Endothelial cell of umbilical vein (primary cell): ENCODE measurements at regions of chr6 and their contacts with region 1.

Region 1: DNA sequence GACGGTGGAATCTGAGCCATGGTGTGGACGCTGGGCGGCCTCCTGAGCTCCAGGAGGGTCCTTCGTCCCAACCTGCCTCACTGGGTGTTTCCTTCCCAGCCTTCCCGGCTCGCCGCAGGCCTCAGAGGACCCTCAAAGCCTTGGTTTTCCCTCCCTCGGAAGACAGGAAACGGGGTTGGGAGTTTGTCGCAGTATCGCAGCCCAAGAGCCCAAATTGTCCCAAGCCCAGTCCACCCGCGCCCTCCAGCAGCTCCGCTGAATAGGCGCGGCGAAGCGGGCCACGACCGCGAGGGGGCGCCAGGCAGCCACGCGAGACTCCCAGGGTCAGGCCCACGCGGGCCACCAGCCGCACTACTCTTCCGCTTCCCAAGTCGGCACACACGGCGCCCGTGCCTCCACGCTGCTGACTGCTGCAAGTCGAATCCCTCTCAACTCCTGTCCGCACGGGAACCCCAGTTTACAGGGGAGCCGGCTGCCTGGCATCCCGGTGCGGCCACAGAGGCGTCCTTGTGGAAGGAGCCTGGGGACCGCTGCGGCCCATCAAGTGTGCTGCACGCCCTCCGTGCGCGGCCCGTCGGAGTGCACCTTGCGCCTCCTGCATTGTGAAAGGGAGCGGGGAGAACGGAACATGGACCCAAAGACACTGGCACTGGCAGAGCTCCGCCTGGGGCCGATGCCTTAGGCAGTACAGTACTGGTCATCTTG is 40.4 kb upstream of the HMGA1 start:
- DNase-seq: peak; percentile 70
- H3K4me3 ChIP-seq: peak overlapping the region in 2 of 3 experiments; percentile 16 to 26
- H3K27ac ChIP-seq: no peak overlapping the region
- H3K4me1 ChIP-seq: peaks cover 9% of the 10 kb centered on the region
- H3K27me3 ChIP-seq: no peaks in the 10 kb centered on the region
- CTCF ChIP-seq: peak; percentile 96 to 98
- POLR2A ChIP-seq: no peak

Region 2: DNA sequence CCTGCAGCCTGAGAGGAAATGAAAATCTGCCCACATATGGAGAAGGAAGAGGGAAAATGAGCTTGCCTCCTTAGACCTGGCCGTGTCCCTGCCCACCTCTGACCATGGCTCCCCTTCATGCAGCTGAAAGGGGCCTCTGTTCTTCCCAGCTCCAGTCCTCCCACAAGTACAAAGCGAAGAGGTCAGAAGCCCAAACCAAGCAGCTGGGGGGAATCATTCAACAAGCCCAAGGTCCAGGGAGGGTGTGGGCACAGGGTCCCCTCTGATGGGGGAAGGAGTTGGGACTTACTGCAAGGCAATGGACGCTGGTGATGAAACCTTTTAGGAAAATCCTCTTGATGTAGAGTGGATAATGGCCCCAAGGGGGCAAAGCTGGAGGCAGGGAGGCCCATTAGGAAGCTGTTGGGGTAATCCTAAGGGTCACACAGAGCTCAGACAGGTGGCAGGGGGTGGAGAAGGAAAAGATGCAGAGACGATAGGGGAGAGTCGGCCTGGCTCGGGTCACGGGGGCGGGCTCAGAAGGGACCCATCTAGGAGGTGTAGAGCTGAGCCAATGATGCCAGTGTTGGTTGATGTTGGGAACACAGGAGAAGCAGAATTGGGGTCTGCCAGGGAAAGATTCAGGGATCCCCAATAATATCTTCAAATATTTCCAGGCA is 34.3 kb before region 1 on chr6:
- CTCF ChIA-PET with region 1: interaction called, 17 read pairs
- POLR2A ChIA-PET with region 1: no interaction called
- dilution Hi-C with region 1: no loop called
- intact Hi-C with region 1: loop called (anchors 2 kb)
- DNase-seq: no peak
- H3K4me3 ChIP-seq: no peak overlapping the region
- H3K27ac ChIP-seq: no peak overlapping the region
- H3K4me1 ChIP-seq: no peaks in the 10 kb centered on the region
- H3K27me3 ChIP-seq: no peaks in the 10 kb centered on the region
- CTCF ChIP-seq: no peak
- POLR2A ChIP-seq: no peak

Region 3: GRCh38 chr6:34223956-34224940 is 28.0 kb after region 1 on chr6:
- CTCF ChIA-PET with region 1: interaction called, 20 read pairs
- POLR2A ChIA-PET with region 1: no interaction called
- dilution Hi-C with region 1: no loop called
- intact Hi-C with region 1: no loop called
- DNase-seq: peak; percentile 95
- H3K4me3 ChIP-seq: peak overlapping the region; percentile 37 to 69 (median 41)
- H3K27ac ChIP-seq: peak overlapping the region; percentile 99
- H3K4me1 ChIP-seq: peaks cover 16% of the 10 kb centered on the region
- H3K27me3 ChIP-seq: no peaks in the 10 kb centered on the region
- CTCF ChIP-seq: no peak
- POLR2A ChIP-seq: no peak

Region 4: DNA sequence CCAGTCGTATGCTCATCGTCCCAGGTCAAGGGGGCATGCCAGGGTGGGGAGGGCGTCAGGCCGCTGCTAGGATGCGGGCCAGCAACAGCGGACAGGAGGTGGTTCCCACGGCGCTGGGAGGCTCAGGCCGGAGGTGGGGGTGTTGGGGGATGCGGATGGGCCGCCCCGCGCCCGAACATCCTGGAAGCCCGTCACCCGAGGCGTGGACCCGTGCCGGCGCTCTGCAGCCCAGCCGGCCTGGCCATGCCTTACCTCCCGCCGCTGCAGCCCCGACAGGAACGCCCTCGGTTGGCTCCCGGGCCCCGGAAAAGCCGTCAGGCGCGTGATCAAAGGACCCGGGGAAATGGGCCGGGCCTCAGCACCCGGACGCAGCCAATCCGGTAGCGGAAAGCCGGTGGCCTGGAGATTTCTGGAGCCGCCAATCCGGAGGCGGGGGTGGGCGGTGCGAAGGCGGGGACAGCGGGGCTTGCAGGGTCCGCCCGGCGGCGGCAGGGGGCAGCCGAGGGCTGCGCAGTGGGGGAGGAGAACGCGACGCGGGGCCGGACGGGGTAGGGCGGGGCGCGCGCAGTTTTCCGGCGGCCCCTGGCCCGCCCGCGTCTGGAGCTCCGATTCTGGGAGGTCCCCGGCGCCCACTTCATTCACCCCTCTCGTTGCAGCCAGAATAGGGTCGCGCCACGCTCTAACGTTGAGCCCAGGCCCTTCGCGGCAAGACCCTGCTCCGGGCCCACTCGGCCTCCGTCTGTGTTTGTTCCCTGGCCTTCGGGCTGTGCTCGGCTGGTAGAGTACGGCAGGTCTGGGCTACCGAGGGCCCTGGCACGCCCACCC is 52.7 kb after region 1 on chr6 and contains the start of gene SMIM29:
- CTCF ChIA-PET with region 1: interaction called, 74 read pairs
- POLR2A ChIA-PET with region 1: interaction called, 5 read pairs
- dilution Hi-C with region 1: no loop called
- intact Hi-C with region 1: loop called (anchors 1 kb)
- DNase-seq: peak; percentile 90
- H3K4me3 ChIP-seq: peak within 1 kb of the TSS; percentile 66 to 88 (median 80)
- H3K27ac ChIP-seq: peak within 1 kb of the TSS; percentile 81
- H3K4me1 ChIP-seq: peaks cover 33% of the 10 kb centered on the region
- H3K27me3 ChIP-seq: no peaks in the 10 kb centered on the region
- CTCF ChIP-seq: peak; percentile 84 to 89
- POLR2A ChIP-seq: peak; percentile 86
- total RNA-seq, gene SMIM29: 37.3 and 37.6 TPM in 2 replicates

Region 5: GRCh38 chr6:34425498-34426410 is 229.5 kb after region 1 on chr6 and contains the start of gene RPS10:
- CTCF ChIA-PET with region 1: interaction called, 17 read pairs
- POLR2A ChIA-PET with region 1: interaction called, 4 read pairs
- dilution Hi-C with region 1: no loop called
- intact Hi-C with region 1: no loop called
- DNase-seq: peak; percentile 96
- H3K4me3 ChIP-seq: peak within 1 kb of the TSS; percentile 66 to 95 (median 90)
- H3K27ac ChIP-seq: peak within 1 kb of the TSS; percentile 79
- H3K4me1 ChIP-seq: peaks cover 15% of the 10 kb centered on the region
- H3K27me3 ChIP-seq: no peaks in the 10 kb centered on the region
- CTCF ChIP-seq: no peak
- POLR2A ChIP-seq: peak; percentile 91
- total RNA-seq, gene RPS10: 1,295 and 1,416 TPM in 2 replicates

Region 6: DNA sequence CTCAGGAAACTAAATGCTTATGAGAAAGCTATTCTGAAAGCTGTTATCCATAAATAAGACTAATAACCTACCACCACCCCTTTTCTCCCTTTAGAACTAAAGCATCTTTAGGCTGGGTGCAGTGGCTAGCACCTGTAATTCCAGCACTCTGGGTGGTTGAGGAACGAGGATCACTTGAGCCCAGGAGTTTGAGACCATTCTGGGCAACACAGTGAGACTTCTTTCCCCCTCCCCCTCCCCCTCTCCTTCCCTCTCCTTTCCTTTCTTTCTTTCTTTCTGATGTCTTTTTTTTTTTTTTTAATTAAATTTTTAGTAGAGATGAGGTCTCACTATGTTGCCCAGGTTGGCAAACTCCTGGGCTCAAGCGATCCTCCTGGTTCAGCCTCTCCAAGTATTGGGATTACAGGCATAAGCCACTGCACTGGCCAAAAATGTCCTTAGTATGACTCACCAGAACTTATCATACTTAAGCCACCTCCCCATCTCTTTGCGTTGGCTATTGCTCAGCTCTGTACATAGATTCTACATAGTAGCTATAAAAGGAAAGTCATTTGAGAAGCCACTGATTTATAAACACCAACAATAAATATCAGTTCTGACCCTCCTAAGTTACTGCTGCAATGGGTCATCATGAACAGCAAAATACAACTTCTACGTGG is 414.7 kb after region 1 on chr6:
- CTCF ChIA-PET with region 1: interaction called, 31 read pairs
- POLR2A ChIA-PET with region 1: no interaction called
- dilution Hi-C with region 1: no loop called
- intact Hi-C with region 1: loop called (anchors 1 kb)
- DNase-seq: peak; percentile 51
- H3K4me3 ChIP-seq: no peak overlapping the region
- H3K27ac ChIP-seq: peak overlapping the region; percentile 65
- H3K4me1 ChIP-seq: peaks cover 10% of the 10 kb centered on the region
- H3K27me3 ChIP-seq: no peaks in the 10 kb centered on the region
- CTCF ChIP-seq: no peak
- POLR2A ChIP-seq: no peak